ENCODE measurements at regions of chr4 and their contacts with region 1.

Region 1: DNA sequence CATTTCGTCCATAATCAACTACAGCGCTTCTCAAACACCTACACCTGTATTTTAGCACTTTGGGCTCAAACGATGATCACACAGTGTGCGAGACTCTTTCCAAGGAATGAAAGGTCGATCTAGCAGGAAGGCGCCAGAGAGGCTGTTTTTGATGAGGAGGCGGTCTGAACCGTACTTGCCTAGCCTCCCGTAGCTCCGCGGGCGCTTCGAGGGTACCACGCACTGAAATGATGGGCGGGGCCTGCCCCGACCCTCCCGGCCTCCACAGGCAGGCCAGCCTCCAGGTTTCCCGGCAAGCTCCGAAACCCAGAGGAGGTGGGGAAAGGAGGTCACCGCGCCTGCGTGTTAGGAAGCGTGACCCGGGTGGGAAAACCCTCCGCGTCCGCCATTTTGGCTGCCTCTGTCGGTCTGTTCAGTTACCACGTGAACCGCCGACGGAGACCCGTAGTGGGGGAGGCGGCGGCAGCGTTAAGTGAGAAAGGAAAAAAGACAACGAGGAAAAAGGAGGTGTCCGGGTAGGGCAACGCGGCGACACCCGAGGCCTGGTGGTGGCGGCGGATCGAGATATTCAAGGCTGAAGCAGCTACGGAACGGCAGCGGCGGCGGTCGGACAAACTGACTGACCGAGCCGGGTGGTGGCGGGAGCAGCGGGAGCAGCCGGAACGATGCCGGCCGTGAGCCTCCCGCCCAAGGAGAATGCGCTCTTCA is at the start of gene NAA15:
- DNase-seq: peak; percentile 99
- H3K4me3 Mint-ChIP-seq: peak within 1 kb of the TSS; percentile 100
- H3K27ac Mint-ChIP-seq: peak within 1 kb of the TSS; percentile 100
- H3K4me1 Mint-ChIP-seq: peaks cover 51% of the 10 kb centered on the region
- H3K27me3 Mint-ChIP-seq: no peaks in the 10 kb centered on the region
- total RNA-seq, gene NAA15: 91.2 to 95.8 TPM

Region 2: GRCh38 chr4:139015269-139015947 is 285.9 kb before region 1 on chr4 and contains the start of gene NOCT:
- CTCF ChIA-PET with region 1: interaction called, 4 read pairs
- POLR2A ChIA-PET with region 1: interaction called, 11 read pairs
- intact Hi-C with region 1: loop called (anchors 1 kb)
- DNase-seq: peak; percentile 97
- H3K4me3 Mint-ChIP-seq: peak within 1 kb of the TSS; percentile 89
- H3K27ac Mint-ChIP-seq: peak within 1 kb of the TSS; percentile 94
- H3K4me1 Mint-ChIP-seq: peaks cover 45% of the 10 kb centered on the region
- H3K27me3 Mint-ChIP-seq: no peaks in the 10 kb centered on the region
- total RNA-seq, gene NOCT: 12.2 to 14.3 TPM

Region 3: DNA sequence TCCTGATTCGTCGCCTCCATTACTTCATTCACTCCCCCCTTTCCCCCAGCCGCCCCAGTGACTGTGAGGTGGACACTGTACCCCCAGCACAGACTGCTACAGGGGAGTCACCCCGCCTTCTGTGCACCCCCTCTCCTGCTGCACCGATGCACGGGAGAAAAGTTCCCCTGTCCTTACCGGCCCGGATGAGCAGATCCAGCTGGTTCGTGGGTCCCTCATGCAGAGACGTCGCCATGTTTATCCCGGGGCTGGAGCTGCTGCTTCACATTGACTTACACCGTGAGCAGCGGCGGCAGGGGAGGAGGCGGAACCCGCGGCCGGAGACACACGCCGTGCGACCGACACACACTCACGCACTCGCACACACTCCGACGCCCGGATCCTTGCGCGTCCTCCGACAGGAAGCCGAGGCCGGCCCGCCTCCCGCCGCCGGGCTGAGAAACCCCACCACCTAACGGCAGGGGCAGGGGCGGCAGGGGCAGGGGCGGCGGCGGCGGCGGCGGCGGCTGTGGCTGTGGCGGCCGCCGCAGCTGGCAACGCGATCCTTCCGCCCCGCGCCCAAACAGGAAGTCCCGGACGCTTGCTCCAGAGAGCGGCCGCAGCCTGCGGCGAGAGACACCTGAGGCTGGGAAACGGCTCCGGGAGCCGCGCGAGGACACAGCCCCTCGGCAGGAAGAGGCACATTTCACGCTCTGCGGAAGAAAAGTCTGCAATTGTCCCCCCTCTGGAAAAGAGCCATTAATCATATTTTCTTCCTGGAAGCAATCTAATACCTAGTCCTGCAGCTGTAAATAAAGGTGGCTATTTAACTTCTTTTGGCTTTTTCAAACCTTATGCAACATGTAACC is 217.1 kb before region 1 on chr4:
- CTCF ChIA-PET with region 1: interaction called, 13 read pairs
- POLR2A ChIA-PET with region 1: interaction called, 13 read pairs
- intact Hi-C with region 1: loop called (anchors 1 kb)
- DNase-seq: peak; percentile 90
- H3K4me3 Mint-ChIP-seq: peak overlapping the region; percentile 98
- H3K27ac Mint-ChIP-seq: peak overlapping the region; percentile 99
- H3K4me1 Mint-ChIP-seq: peaks cover 36% of the 10 kb centered on the region
- H3K27me3 Mint-ChIP-seq: no peaks in the 10 kb centered on the region

Region 4: DNA sequence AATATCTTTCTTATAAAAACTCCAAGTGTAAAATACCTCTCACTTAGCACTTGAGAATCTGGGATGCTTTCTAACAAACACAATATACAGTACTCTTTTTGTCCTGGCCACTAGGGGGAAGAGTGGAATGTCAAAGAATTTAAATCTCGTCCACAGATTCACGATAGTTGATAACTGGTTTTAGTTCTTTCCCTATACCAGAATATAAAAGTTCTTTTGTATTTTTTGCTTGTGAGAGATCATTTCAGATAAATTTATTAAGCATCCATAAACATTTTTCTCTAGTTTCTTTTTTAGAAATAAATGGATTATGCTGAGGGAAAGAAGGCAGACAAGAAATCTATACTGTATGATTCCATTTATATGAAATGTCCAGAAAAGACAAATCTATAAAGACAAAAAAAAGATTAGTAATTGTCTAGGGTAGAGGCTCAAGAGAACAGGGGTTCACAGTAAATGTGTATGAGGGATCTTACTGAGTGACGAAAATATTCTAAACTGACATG is 71.7 kb before region 1 on chr4:
- CTCF ChIA-PET with region 1: interaction called, 36 read pairs
- POLR2A ChIA-PET with region 1: interaction called, 4 read pairs
- intact Hi-C with region 1: loop called (anchors 1 kb)
- DNase-seq: no peak
- H3K4me3 Mint-ChIP-seq: no peak overlapping the region
- H3K27ac Mint-ChIP-seq: no peak overlapping the region
- H3K4me1 Mint-ChIP-seq: no peaks in the 10 kb centered on the region
- H3K27me3 Mint-ChIP-seq: no peaks in the 10 kb centered on the region

Region 5: DNA sequence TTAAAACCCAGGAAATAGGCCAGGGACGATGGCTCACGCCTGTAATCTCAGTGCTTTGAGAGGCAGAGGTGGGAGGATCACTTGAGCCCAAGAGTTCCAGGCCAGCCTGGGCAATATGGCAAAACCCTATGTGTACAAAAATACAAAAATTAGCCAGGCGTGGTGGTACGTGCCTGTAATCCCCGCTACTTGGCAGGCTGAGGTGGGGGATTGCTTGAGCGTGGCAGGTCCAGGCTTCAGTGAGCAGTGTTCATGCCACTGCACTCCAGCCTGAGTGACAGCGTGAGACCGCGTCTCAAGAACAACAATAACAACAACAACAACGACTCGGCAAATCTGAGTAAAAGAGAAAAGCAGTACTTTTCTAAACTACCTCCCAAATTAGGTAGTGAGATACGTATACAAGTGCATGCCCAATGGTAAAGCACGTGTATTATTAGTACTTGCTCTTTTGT is 14.0 kb after region 1 on chr4:
- CTCF ChIA-PET with region 1: interaction called, 5 read pairs
- POLR2A ChIA-PET with region 1: interaction called, 6 read pairs
- intact Hi-C with region 1: loop called (anchors 1 kb)
- DNase-seq: no peak
- H3K4me3 Mint-ChIP-seq: no peak overlapping the region
- H3K27ac Mint-ChIP-seq: peak overlapping the region; percentile 77
- H3K4me1 Mint-ChIP-seq: peaks cover 72% of the 10 kb centered on the region
- H3K27me3 Mint-ChIP-seq: no peaks in the 10 kb centered on the region

Region 6: GRCh38 chr4:139331185-139331584 is 29.9 kb after region 1 on chr4:
- CTCF ChIA-PET with region 1: interaction called, 5 read pairs
- POLR2A ChIA-PET with region 1: no interaction called
- intact Hi-C with region 1: loop called (anchors 1 kb)
- DNase-seq: no peak
- H3K4me3 Mint-ChIP-seq: no peak overlapping the region
- H3K27ac Mint-ChIP-seq: no peak overlapping the region
- H3K4me1 Mint-ChIP-seq: peaks cover 45% of the 10 kb centered on the region
- H3K27me3 Mint-ChIP-seq: no peaks in the 10 kb centered on the region

Region 7: GRCh38 chr4:139554893-139555704 is 253.8 kb after region 1 on chr4:
- CTCF ChIA-PET with region 1: no interaction called
- POLR2A ChIA-PET with region 1: interaction called, 8 read pairs
- intact Hi-C with region 1: loop called (anchors 2 kb)
- DNase-seq: peak; percentile 91
- H3K4me3 Mint-ChIP-seq: peak overlapping the region; percentile 95
- H3K27ac Mint-ChIP-seq: peak overlapping the region; percentile 96
- H3K4me1 Mint-ChIP-seq: peaks cover 62% of the 10 kb centered on the region
- H3K27me3 Mint-ChIP-seq: no peaks in the 10 kb centered on the region

Measured in activated CD4-positive, alpha-beta memory T cell treated with anti-CD3 and anti-CD28 coated beads for 36 hours (primary cell).